CD8-positive, alpha-beta T cell (primary cell): ENCODE measurements at regions of chr15 and their contacts with region 1.

Region 1: GRCh38 chr15:74635228-74635627 is 19.6 kb downstream of the CLK3 start:
- DNase-seq: peak; percentile 53 to 84 (median 73)
- ATAC-seq: peak; percentile 95
- H3K4me3 ChIP-seq: no peak overlapping the region
- H3K4me3 Mint-ChIP-seq: no peak overlapping the region
- H3K27ac ChIP-seq: peak overlapping the region in 1 of 2 experiments; percentile 36
- H3K27ac Mint-ChIP-seq: no peak overlapping the region
- H3K4me1 ChIP-seq: peaks cover 6% of the 10 kb centered on the region
- H3K4me1 Mint-ChIP-seq: peaks cover 5% of the 10 kb centered on the region
- H3K27me3 ChIP-seq: no peaks in the 10 kb centered on the region
- H3K27me3 Mint-ChIP-seq: no peaks in the 10 kb centered on the region
- CTCF ChIP-seq: peak; percentile 82

Region 2: DNA sequence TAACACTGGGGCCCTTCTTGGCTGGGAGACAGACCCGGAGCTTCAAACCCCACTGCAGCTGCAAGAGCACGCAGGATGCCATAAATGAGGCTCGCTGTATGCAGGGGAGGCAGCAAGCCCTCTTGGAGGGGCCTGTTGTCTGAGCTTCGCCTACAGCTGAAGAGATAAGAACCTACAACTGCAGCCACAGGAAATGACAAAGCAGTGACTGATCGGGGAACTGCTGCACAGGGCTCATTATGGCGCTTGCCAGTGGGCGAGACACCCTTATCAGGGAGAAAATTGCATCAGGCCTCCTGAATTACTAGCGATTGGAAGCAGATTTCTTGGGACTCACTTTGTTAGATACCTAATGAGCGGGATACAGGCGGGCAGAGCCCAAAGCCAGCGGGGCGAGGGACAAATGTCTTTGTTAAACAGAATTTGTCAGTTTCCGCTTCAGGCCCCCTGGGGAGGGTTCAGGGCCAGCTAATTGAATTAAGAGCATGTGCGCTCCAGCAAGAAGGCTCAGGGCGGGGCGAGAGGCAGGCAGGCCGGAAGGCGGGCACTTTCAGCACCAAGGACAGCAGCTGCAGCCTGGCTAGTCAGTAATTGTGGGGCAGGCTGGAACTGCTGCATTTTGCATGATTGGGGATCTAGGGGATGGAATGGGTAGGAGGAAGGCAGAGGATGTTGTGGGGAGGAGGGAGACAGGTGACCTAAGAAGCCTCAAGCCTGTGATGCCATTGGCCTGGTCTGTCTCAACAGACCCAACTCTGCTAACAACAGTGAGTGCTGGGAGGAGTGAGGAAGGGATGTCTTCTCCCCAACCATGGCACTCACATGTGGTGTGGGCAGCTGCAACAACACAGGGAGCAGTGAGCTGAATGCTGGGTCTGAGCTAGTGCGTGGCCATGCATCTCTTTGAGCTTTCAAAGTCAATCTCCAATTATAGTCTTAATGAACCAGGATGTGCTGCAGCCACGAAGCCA is 343.8 kb before region 1 on chr15:
- CTCF ChIA-PET with region 1: no interaction called
- POLR2A ChIA-PET with region 1: no interaction called
- intact Hi-C with region 1: no loop called
- DNase-seq: peak; percentile 45 to 78 (median 69)
- ATAC-seq: peak; percentile 59
- H3K4me3 ChIP-seq: no peak overlapping the region
- H3K4me3 Mint-ChIP-seq: no peak overlapping the region
- H3K27ac ChIP-seq: no peak overlapping the region
- H3K27ac Mint-ChIP-seq: no peak overlapping the region
- H3K4me1 ChIP-seq: no peaks in the 10 kb centered on the region
- H3K4me1 Mint-ChIP-seq: no peaks in the 10 kb centered on the region
- H3K27me3 ChIP-seq: peaks cover 0 to 2% of the 10 kb centered on the region in 2 experiments
- H3K27me3 Mint-ChIP-seq: peaks cover 38% of the 10 kb centered on the region
- CTCF ChIP-seq: no peak

Region 3: DNA sequence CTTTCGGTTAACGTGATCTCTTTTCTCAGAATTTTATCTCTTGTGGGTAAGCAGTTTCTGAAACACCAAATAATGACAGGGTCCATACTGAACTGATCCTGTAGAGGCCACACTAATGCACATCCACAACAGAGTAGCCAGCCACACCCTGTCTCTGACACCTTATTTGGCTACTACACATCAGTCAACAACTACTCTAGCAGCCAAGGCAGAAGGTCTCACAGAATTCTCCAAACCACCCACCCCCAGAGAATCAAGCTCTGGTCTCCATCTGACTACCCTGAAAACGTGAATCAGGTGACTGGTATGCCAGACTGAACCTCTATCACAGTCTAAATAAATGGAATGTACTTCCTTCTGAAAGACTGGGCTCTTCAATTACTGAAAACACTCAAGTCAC is 22.6 kb after region 1 on chr15:
- CTCF ChIA-PET with region 1: interaction called, 10 read pairs
- POLR2A ChIA-PET with region 1: no interaction called
- intact Hi-C with region 1: no loop called
- DNase-seq: no peak
- ATAC-seq: no peak
- H3K4me3 ChIP-seq: no peak overlapping the region
- H3K4me3 Mint-ChIP-seq: no peak overlapping the region
- H3K27ac ChIP-seq: no peak overlapping the region
- H3K27ac Mint-ChIP-seq: no peak overlapping the region
- H3K4me1 ChIP-seq: no peaks in the 10 kb centered on the region
- H3K4me1 Mint-ChIP-seq: peaks cover 31% of the 10 kb centered on the region
- H3K27me3 ChIP-seq: no peaks in the 10 kb centered on the region
- H3K27me3 Mint-ChIP-seq: no peaks in the 10 kb centered on the region
- CTCF ChIP-seq: no peak

Region 4: DNA sequence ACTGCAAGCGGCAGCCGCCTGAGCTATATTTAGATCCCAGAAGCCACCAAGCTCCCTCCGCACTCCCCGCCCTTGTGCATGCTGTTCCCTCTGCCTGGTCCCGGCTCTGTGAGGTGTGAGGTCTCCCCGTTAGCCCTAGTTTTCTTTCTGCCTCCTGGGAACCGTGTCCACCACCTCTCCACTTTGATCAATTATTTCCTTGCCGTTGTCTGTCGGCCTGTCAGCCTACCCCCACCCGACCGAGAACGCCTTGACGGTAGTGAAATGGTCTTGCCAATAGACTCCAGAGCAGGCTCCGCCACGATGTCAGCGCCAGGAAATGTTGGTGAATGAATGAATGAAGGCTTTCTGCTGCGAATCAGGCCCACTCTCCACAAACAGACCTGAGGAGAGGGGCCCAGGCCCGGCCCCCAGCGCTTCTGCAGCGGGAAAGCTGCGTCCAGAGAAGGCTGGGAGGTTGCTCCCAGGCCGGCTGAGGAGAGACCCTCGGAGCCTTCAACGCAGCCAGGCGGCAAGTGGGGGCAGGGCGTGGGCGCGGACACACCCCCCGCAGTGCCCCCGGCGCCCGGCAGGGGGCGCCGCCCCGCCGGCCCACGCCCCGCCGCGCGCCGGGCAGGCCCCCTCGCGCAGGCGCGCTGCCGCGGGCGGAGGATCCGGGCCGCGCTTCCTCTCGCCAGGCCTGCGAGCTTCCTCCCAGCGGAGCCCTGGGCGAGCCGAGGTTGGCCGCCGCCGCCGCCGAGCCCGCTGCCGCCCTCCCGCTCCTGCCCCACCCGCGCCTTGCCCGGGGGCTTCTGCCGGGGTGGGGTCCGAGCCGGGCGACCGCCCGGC is 146.4 kb after region 1 on chr15 and contains the start of gene CSK:
- CTCF ChIA-PET with region 1: interaction called, 730 read pairs
- POLR2A ChIA-PET with region 1: no interaction called
- intact Hi-C with region 1: no loop called
- DNase-seq: peak; percentile 56 to 92 (median 79)
- ATAC-seq: peak; percentile 63
- H3K4me3 ChIP-seq: peak within 1 kb of the TSS; percentile 93 to 98
- H3K4me3 Mint-ChIP-seq: peak within 1 kb of the TSS; percentile 85
- H3K27ac ChIP-seq: peak within 1 kb of the TSS; percentile 74 to 90
- H3K27ac Mint-ChIP-seq: peak within 1 kb of the TSS; percentile 93
- H3K4me1 ChIP-seq: peaks cover 70% of the 10 kb centered on the region
- H3K4me1 Mint-ChIP-seq: peaks cover 66% of the 10 kb centered on the region
- H3K27me3 ChIP-seq: no peaks in the 10 kb centered on the region
- H3K27me3 Mint-ChIP-seq: no peaks in the 10 kb centered on the region
- CTCF ChIP-seq: peak; percentile 56
- total RNA-seq, gene CSK: 99.5 to 118 TPM

Region 5: GRCh38 chr15:74799856-74800547 is 164.8 kb after region 1 on chr15:
- CTCF ChIA-PET with region 1: interaction called, 151 read pairs
- POLR2A ChIA-PET with region 1: interaction called, 4 read pairs
- intact Hi-C with region 1: loop called in 1 of 2 experiments (anchors 1 kb)
- DNase-seq: peak; percentile 74 to 94 (median 87)
- ATAC-seq: peak; percentile 95
- H3K4me3 ChIP-seq: no peak overlapping the region
- H3K4me3 Mint-ChIP-seq: peak overlapping the region; percentile 42
- H3K27ac ChIP-seq: peak overlapping the region; percentile 36 to 94
- H3K27ac Mint-ChIP-seq: peak overlapping the region; percentile 92
- H3K4me1 ChIP-seq: peaks cover 56% of the 10 kb centered on the region
- H3K4me1 Mint-ChIP-seq: peaks cover 56% of the 10 kb centered on the region
- H3K27me3 ChIP-seq: no peaks in the 10 kb centered on the region
- H3K27me3 Mint-ChIP-seq: no peaks in the 10 kb centered on the region
- CTCF ChIP-seq: peak; percentile 92

Region 6: DNA sequence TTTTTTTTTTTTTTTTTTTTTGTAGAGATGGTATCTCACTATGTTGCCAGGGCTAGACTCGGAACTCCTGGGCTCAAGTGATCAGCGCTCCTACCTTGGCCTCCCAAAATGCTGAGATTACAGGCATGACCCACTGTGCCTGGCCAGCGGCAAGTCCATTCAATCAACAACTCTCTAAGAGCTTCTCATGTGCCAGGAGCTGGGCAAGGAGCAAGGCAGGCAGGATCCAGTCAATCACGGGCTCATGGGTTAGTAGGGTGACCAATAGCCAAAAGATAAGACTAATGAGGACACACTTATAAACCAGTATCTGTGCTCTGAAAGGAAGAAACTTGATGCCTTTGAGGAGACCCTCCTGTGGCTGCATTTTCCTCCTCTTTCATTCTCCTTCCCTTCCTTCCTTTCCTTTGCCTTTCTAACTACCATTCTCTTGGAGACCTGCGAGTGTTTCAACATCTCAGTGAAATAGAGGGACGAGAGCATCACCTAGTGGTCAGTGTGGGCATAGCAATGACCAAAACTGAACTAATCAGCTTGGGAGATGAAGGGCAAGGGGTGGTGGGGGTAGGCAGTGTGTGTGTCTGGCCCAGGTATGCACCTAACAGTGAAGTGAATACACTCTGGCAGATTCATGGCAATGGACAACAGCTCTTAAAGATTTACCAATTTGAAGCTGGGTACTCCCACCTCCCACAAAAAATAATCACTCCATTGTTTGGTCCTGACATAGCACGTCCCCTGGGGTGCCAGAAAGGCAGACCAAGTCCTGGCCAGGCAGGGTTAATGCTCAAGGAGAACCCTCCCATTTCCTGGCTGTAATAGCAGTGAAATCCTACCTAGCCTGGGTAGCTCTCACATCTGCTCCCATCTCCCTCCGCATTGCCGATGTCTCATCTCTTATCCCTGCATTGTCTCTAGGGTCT is 315.1 kb after region 1 on chr15:
- CTCF ChIA-PET with region 1: interaction called, 64 read pairs
- POLR2A ChIA-PET with region 1: no interaction called
- intact Hi-C with region 1: loop called (anchors 1 kb)
- DNase-seq: peak; percentile 65 to 84 (median 79)
- ATAC-seq: peak; percentile 99
- H3K4me3 ChIP-seq: no peak overlapping the region
- H3K4me3 Mint-ChIP-seq: no peak overlapping the region
- H3K27ac ChIP-seq: no peak overlapping the region
- H3K27ac Mint-ChIP-seq: no peak overlapping the region
- H3K4me1 ChIP-seq: no peaks in the 10 kb centered on the region
- H3K4me1 Mint-ChIP-seq: peaks cover 6% of the 10 kb centered on the region
- H3K27me3 ChIP-seq: peaks cover 0 to 2% of the 10 kb centered on the region in 2 experiments
- H3K27me3 Mint-ChIP-seq: no peaks in the 10 kb centered on the region
- CTCF ChIP-seq: peak; percentile 94